ENCODE measurements at regions of chr22 and their contacts with region 1.

Region 1: GRCh38 chr22:41940832-41941765 is 5.9 kb downstream of the CENPM start:
- DNase-seq: peak; percentile 82 to 84
- ATAC-seq: peak; percentile 85 to 94 (median 88)
- H3K4me3 ChIP-seq: no peak overlapping the region
- H3K27ac ChIP-seq: peak overlapping the region in 2 of 10 donors; percentile 5 to 85
- H3K4me1 ChIP-seq: peaks cover 0 to 34% (median 10%) of the 10 kb centered on the region in 9 donors
- H3K27me3 ChIP-seq: no peaks in the 10 kb centered on the region
- CTCF ChIP-seq: peak; percentile 80 to 98 (median 92)

Region 2: GRCh38 chr22:41666661-41667258 is 274.3 kb before region 1 on chr22:
- intact Hi-C with region 1: loop called in 1 of 10 experiments (anchors 1 kb)
- DNase-seq: peak; percentile 85 to 91
- ATAC-seq: peak; percentile 87 to 96 (median 92)
- H3K4me3 ChIP-seq: peak overlapping the region in 9 of 10 donors; percentile 12 to 55 (median 48)
- H3K27ac ChIP-seq: peak overlapping the region; percentile 71 to 94 (median 88)
- H3K4me1 ChIP-seq: peaks cover 0 to 24% (median 5%) of the 10 kb centered on the region in 9 donors
- H3K27me3 ChIP-seq: no peaks in the 10 kb centered on the region
- CTCF ChIP-seq: peak; percentile 95 to 100 (median 99)

Region 3: GRCh38 chr22:41746567-41747400 is 194.3 kb before region 1 on chr22:
- intact Hi-C with region 1: loop called in 9 of 10 experiments (anchors 1 to 5 kb)
- DNase-seq: peak; percentile 58 to 70
- ATAC-seq: peak; percentile 51 to 95 (median 84)
- H3K4me3 ChIP-seq: no peak overlapping the region
- H3K27ac ChIP-seq: no peak overlapping the region
- H3K4me1 ChIP-seq: no peaks in the 10 kb centered on the region
- H3K27me3 ChIP-seq: peaks cover 0 to 10% (median 0%) of the 10 kb centered on the region in 7 donors
- CTCF ChIP-seq: peak; percentile 43 to 82 (median 76)

Region 4: GRCh38 chr22:41752011-41752970 is 188.8 kb before region 1 on chr22:
- intact Hi-C with region 1: loop called in 7 of 10 experiments (anchors 2 to 5 kb)
- DNase-seq: no peak
- ATAC-seq: no peak
- H3K4me3 ChIP-seq: no peak overlapping the region
- H3K27ac ChIP-seq: no peak overlapping the region
- H3K4me1 ChIP-seq: no peaks in the 10 kb centered on the region
- H3K27me3 ChIP-seq: no peaks in the 10 kb centered on the region
- CTCF ChIP-seq: no peak

Region 5: GRCh38 chr22:41822317-41823060 is 118.6 kb before region 1 on chr22:
- intact Hi-C with region 1: loop called (anchors 1 to 5 kb)
- DNase-seq: no peak
- ATAC-seq: peak in 1 of 8 donors; percentile 24
- H3K4me3 ChIP-seq: no peak overlapping the region
- H3K27ac ChIP-seq: no peak overlapping the region
- H3K4me1 ChIP-seq: peaks cover 12 to 28% (median 23%) of the 10 kb centered on the region in 9 donors
- H3K27me3 ChIP-seq: no peaks in the 10 kb centered on the region
- CTCF ChIP-seq: peak in 8 of 9 donors; percentile 24 to 69 (median 56)

Region 6: DNA sequence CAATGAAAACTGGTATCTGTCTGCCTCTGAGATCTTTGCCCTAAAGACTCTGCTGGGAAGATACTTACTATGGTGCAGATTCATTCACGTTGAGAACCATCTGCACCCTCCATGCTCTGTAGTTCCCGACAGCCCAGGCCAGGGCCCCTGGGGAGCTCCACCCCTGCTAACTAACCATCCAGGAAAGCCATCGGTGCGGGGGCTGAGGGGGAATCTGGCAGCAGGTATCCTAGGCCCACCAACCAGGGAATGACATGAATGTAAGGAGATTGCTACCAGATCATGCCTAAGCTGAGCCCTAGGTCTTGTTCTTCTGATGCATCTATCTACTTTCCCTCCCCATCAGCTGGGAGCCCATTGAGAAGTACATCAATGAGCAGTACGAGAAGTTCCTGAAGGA is 46.2 kb after region 1 on chr22:
- intact Hi-C with region 1: no loop called
- DNase-seq: no peak
- ATAC-seq: no peak
- H3K4me3 ChIP-seq: no peak overlapping the region
- H3K27ac ChIP-seq: no peak overlapping the region
- H3K4me1 ChIP-seq: peaks cover 0 to 10% (median 0%) of the 10 kb centered on the region in 9 donors
- H3K27me3 ChIP-seq: peaks cover 0 to 9% (median 0%) of the 10 kb centered on the region in 7 donors
- CTCF ChIP-seq: no peak

Region 7: DNA sequence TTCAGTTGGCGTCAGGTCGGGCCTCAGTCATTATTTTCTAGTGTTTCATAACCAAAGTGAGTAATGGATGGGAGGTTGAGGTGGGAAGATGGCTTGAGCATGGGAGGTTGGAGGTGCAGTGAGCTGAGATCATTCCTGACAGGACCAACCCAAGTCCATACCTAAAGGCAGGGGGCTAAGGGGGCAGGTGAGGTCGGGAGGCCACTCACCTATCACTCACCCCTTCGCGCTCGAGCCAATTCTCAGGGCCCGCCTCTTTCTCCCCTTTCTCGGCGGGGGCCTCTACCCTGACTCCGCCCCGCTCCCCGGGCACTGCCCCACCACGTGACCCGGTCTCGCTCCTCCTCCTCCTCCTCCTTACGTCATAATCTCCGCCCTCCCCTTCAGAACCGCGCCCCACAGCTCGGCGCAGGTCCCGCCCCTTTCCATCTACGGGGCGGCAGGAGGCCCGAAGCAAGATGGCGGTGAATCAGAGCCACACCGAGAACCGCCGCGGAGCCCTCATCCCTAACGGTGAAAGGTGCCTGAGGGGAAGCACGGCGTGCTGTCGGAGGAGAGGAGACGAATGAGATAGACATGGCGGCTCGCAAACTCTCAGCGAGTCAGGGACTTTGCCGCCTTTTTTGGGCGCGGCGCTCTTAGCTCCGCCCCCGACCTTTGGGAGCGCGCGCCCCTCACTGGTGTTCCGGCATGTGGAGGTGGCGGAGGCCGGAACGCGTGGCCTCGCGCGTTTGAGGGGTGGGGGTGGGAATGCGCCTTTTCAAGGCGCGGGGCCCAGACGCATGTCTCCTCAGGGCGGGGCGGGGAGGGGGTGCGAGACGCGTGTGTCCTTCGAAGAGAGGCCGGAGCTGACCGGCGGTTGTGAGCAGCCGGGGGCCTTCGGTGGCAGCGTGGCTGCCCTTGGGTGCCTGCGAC is 57.5 kb after region 1 on chr22 and contains the start of gene WBP2NL:
- intact Hi-C with region 1: no loop called
- DNase-seq: peak; percentile 79 to 80
- ATAC-seq: peak; percentile 92 to 98 (median 97)
- H3K4me3 ChIP-seq: peak within 1 kb of the TSS in 9 of 10 donors; percentile 30 to 60 (median 56)
- H3K27ac ChIP-seq: peak within 1 kb of the TSS in 1 of 10 donors; percentile 75
- H3K4me1 ChIP-seq: peaks cover 0 to 11% (median 0%) of the 10 kb centered on the region in 9 donors
- H3K27me3 ChIP-seq: peaks cover 0 to 16% (median 0%) of the 10 kb centered on the region in 7 donors
- CTCF ChIP-seq: no peak
- total RNA-seq, gene WBP2NL: 0.09 to 0.81 (median 0.21) TPM in 5 of 10 donors, not detected in the others

Measured in heart right ventricle (tissue), 16 donors.